Activated T-helper 2 cell treated with anti-CD3 and anti-CD28 coated beads, Interferon-gamma antibody, Interleukin-2, Interleukin-4, amounts not matched to agents 10 μg/mL and 5 μg/mL and 100 μg/mL, durations not matched to agents 14 hours and 24 hours and 36 hours (primary cell): ENCODE measurements at regions of chr7 and their contacts with region 1.

Region 1: DNA sequence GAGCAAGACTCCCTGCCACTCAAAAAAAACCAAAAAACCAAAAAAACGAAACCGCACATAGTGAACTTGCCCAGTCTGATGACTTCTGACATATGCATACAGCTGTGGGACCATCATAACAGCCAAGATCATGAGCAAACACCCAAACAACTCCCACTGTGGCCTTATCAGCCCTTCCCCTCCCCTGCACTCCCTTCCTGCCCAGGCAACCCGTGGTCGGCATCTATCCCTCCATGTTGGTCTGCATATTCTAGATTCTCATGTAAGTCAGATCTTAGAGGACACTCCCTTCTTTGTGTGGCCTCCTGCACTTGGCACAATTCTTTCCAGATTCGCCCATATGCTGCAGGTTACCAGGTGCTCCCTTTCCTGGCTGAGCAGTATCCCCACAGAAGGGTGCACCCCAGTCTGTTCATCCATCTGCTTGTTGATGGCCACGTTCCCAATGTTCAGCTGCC is 72.8 kb downstream of the GNA12 start:
- DNase-seq: no peak
- H3K4me3 Mint-ChIP-seq: peak overlapping the region; percentile 8
- H3K27ac Mint-ChIP-seq: peak overlapping the region; percentile 94
- H3K4me1 Mint-ChIP-seq: peaks cover 48% of the 10 kb centered on the region
- H3K27me3 Mint-ChIP-seq: no peaks in the 10 kb centered on the region

Region 2: GRCh38 chr7:2720582-2721491 is 50.5 kb before region 1 on chr7:
- intact Hi-C with region 1: loop called (anchors 2 kb)
- DNase-seq: peak; percentile 60
- H3K4me3 Mint-ChIP-seq: no peak overlapping the region
- H3K27ac Mint-ChIP-seq: peak overlapping the region; percentile 42
- H3K4me1 Mint-ChIP-seq: peaks cover 43% of the 10 kb centered on the region
- H3K27me3 Mint-ChIP-seq: no peaks in the 10 kb centered on the region

Region 3: GRCh38 chr7:2757904-2758672 is 13.2 kb before region 1 on chr7:
- intact Hi-C with region 1: loop called (anchors 1 kb)
- DNase-seq: peak; percentile 63
- H3K4me3 Mint-ChIP-seq: peak overlapping the region; percentile 71
- H3K27ac Mint-ChIP-seq: peak overlapping the region; percentile 97
- H3K4me1 Mint-ChIP-seq: peaks cover 50% of the 10 kb centered on the region
- H3K27me3 Mint-ChIP-seq: no peaks in the 10 kb centered on the region

Region 4: GRCh38 chr7:2781636-2782035 is 10.3 kb after region 1 on chr7:
- intact Hi-C with region 1: loop called (anchors 1 kb)
- DNase-seq: no peak
- H3K4me3 Mint-ChIP-seq: no peak overlapping the region
- H3K27ac Mint-ChIP-seq: peak overlapping the region; percentile 74
- H3K4me1 Mint-ChIP-seq: peaks cover 50% of the 10 kb centered on the region
- H3K27me3 Mint-ChIP-seq: no peaks in the 10 kb centered on the region

Region 5: DNA sequence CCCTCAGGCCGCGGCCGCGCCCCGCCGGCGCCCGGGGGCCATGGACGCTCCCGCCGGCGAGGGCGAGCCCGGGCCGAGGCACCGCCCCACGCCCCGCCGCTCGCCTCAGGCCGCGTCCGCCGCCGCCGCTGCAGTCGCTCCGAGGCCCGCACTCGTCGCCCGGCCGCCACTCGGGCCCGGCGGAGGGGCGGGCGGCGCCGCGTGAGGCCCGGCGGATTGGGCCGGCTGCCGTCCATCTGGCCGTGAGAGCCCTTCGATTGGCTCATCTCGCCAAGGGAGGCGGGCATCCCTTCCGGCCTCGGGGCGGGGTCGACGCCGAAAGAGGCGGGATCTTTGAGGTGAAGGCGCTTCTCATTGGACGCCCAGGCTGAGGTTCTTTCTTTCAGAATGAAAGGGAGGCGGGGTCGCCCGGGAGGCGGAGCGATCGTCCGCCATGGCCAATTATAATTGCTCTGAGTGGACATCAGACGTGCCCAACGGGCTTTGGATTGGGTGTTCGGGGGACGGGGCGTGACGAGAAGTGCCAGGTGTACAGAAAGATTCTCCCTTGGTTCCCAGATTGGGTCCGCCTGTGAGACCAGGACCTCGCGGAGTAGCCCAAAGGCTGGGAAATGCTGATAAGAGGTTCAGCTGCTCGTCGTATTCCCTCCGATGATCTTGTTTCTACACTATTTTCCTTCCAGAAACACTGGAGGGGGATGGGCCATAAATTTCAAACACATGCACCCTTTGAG is 73.0 kb after region 1 on chr7 and contains the start of gene GNA12:
- intact Hi-C with region 1: loop called (anchors 2 kb)
- DNase-seq: peak; percentile 99
- H3K4me3 Mint-ChIP-seq: peak within 1 kb of the TSS; percentile 83
- H3K27ac Mint-ChIP-seq: peak within 1 kb of the TSS; percentile 68
- H3K4me1 Mint-ChIP-seq: peaks cover 25% of the 10 kb centered on the region
- H3K27me3 Mint-ChIP-seq: no peaks in the 10 kb centered on the region
- total RNA-seq, gene GNA12: 40.9 and 41.4 TPM in 2 replicates

Region 6: GRCh38 chr7:3103614-3104398 is 332.5 kb after region 1 on chr7:
- intact Hi-C with region 1: loop called (anchors 10 kb)
- DNase-seq: no peak
- H3K4me3 Mint-ChIP-seq: no peak overlapping the region
- H3K27ac Mint-ChIP-seq: no peak overlapping the region
- H3K4me1 Mint-ChIP-seq: peaks cover 58% of the 10 kb centered on the region
- H3K27me3 Mint-ChIP-seq: no peaks in the 10 kb centered on the region